Mammary epithelial cell (primary cell): ENCODE measurements at regions of chr15 and their contacts with region 1.

Region 1: GRCh38 chr15:61046291-61046690 is 182.8 kb downstream of the RORA start:
- DNase-seq: no peak
- H3K4me3 ChIP-seq: no peak overlapping the region
- H3K27ac ChIP-seq: no peak overlapping the region
- H3K4me1 ChIP-seq: no peaks in the 10 kb centered on the region
- H3K27me3 ChIP-seq: no peaks in the 10 kb centered on the region
- CTCF ChIP-seq: no peak

Region 2: GRCh38 chr15:60916679-60917460 is 129.4 kb before region 1 on chr15:
- CTCF ChIA-PET with region 1: no interaction called
- dilution Hi-C with region 1: no loop called
- in situ Hi-C with region 1: no loop called
- intact Hi-C with region 1: no loop called
- DNase-seq: peak; percentile 57
- H3K4me3 ChIP-seq: no peak overlapping the region
- H3K27ac ChIP-seq: no peak overlapping the region
- H3K4me1 ChIP-seq: no peaks in the 10 kb centered on the region
- H3K27me3 ChIP-seq: no peaks in the 10 kb centered on the region
- CTCF ChIP-seq: peak; percentile 68 to 85

Region 3: GRCh38 chr15:61084944-61085367 is 38.7 kb after region 1 on chr15:
- CTCF ChIA-PET with region 1: interaction called, 12 read pairs
- dilution Hi-C with region 1: no loop called
- in situ Hi-C with region 1: no loop called
- intact Hi-C with region 1: no loop called
- DNase-seq: no peak
- H3K4me3 ChIP-seq: no peak overlapping the region
- H3K27ac ChIP-seq: no peak overlapping the region
- H3K4me1 ChIP-seq: no peaks in the 10 kb centered on the region
- H3K27me3 ChIP-seq: no peaks in the 10 kb centered on the region
- CTCF ChIP-seq: no peak

Region 4: DNA sequence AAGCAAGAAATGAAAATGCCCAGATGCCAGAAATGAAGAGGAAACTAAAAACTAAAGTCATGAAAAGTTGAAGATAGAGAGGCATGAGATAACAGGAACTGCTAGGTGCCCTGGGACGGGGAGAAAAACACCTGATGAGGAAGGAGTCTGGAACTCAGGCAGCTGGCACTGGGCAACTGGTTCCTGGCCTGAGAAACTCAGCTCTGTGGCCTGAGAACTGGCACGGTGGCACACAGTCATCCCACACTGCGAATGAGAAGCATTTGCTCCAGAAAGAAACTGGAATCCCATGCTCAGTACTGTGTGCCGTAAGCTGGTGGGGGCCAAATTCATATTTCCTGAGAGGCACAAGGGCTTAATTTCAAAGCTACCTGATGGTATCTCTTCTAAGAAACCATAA is 236.4 kb after region 1 on chr15:
- CTCF ChIA-PET with region 1: no interaction called
- dilution Hi-C with region 1: no loop called
- in situ Hi-C with region 1: no loop called
- intact Hi-C with region 1: no loop called
- DNase-seq: no peak
- H3K4me3 ChIP-seq: no peak overlapping the region
- H3K27ac ChIP-seq: no peak overlapping the region
- H3K4me1 ChIP-seq: no peaks in the 10 kb centered on the region
- H3K27me3 ChIP-seq: no peaks in the 10 kb centered on the region
- CTCF ChIP-seq: no peak